Left cardiac atrium (tissue), 4 donors: ENCODE measurements at regions of chr12 and their contacts with region 1.

Region 1: GRCh38 chr12:95473884-95474659 is at the start of gene METAP2:
- DNase-seq: peak; percentile 98
- ATAC-seq: peak; percentile 100
- total RNA-seq, gene METAP2: 51.9 to 60.2 TPM

Region 2: GRCh38 chr12:95262808-95263207 is 211.3 kb before region 1 on chr12:
- intact Hi-C with region 1: no loop called
- DNase-seq: no peak
- ATAC-seq: peak; percentile 35 to 65

Region 3: GRCh38 chr12:95351748-95352147 is 122.3 kb before region 1 on chr12:
- intact Hi-C with region 1: loop called in 1 of 2 experiments (anchors 10 kb)
- DNase-seq: peak; percentile 36
- ATAC-seq: peak; percentile 68 to 80

Region 4: GRCh38 chr12:95380997-95381786 is 92.9 kb before region 1 on chr12:
- intact Hi-C with region 1: loop called in 1 of 2 experiments (anchors 5 kb)
- DNase-seq: no peak
- ATAC-seq: no peak

Region 5: DNA sequence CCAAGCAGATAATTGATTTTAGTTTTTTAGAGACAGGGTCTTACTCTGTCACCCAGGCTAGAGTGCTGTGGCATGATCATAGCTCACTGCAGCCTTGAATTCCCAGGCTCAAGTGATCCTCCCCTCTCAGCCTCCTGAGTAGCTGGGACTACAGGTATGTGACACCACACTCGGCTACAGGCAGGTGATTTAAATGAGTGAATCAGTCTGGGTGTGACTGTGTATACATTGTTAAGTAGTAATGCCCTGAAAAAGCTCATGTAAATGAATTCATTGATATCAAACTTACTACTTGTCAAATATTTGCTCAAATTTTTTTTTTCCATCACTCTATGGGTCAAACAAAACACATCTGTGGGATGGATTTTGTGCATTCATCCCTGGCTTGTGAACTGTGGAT is 83.6 kb after region 1 on chr12:
- intact Hi-C with region 1: no loop called
- DNase-seq: no peak
- ATAC-seq: no peak

Region 6: GRCh38 chr12:95784286-95784685 is 310.2 kb after region 1 on chr12:
- intact Hi-C with region 1: no loop called
- DNase-seq: no peak
- ATAC-seq: peak in 1 of 2 donors; percentile 47